ENCODE measurements at regions of chr1 and their contacts with region 1.

Region 1: DNA sequence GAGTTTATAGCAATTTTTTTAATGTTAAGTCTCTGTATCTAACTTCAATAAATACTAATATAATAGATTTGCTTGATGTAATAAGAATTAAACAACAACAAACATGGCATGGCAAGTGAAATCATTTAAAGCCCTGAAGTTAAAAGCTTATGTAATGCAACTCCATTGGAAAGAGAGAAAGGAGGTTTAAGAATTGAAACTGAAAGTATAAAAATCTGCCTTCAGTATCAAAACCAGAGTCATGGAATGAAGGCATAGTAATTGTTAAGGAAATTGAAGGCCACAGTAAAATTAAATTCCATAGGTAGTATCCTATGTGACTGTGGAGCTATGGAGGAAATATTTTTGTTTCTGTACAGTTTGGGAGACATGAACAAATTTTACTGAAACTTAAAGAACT is 55.1 kb downstream of the PRDX6 start:
- DNase-seq: no peak
- H3K4me3 ChIP-seq: no peak overlapping the region
- H3K27ac ChIP-seq: no peak overlapping the region
- H3K4me1 ChIP-seq: no peaks in the 10 kb centered on the region
- H3K27me3 ChIP-seq: no peaks in the 10 kb centered on the region
- CTCF ChIP-seq: no peak

Region 2: DNA sequence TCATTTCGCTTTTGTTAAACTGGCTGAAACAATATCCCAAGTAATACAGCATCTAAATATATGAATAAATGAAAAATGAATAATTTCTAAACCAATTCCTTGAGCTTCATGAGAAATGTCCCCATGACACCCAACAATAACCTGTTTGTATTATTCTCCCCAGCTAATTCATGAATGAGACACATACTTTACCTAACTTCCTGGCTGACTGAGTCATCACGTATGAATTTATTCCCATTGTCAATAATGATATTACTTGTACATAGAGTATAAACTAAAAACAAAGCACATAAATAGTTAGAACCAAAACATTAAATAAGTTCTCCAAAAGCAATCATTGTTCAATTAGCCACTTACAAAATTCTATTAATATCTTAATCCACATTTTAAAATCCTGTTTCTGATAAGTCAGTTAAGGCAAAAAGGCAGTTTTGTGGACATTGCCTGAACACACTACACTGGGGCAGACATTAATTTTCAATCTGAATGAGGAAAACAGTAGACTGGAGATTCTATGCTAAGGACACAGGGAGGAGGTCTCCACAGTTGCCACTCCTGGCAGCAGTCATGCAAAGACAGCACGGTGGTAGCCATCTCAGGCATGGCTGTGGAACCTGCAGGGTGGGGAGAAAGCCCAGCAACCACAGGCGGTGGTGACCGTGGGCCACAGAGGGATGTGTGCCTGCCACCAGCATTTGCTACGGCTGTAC is 22.5 kb after region 1 on chr1:
- CTCF ChIA-PET with region 1: no interaction called
- POLR2A ChIA-PET with region 1: interaction called, 13 read pairs
- intact Hi-C with region 1: no loop called
- DNase-seq: no peak
- H3K4me3 ChIP-seq: no peak overlapping the region
- H3K27ac ChIP-seq: no peak overlapping the region
- H3K4me1 ChIP-seq: no peaks in the 10 kb centered on the region
- H3K27me3 ChIP-seq: no peaks in the 10 kb centered on the region
- CTCF ChIP-seq: no peak

Region 3: GRCh38 chr1:173590557-173590956 is 58.3 kb after region 1 on chr1:
- CTCF ChIA-PET with region 1: no interaction called
- POLR2A ChIA-PET with region 1: no interaction called
- intact Hi-C with region 1: loop called (anchors 5 kb)
- DNase-seq: peak; percentile 51
- H3K4me3 ChIP-seq: no peak overlapping the region
- H3K27ac ChIP-seq: no peak overlapping the region
- H3K4me1 ChIP-seq: no peaks in the 10 kb centered on the region
- H3K27me3 ChIP-seq: no peaks in the 10 kb centered on the region
- CTCF ChIP-seq: no peak